Activated CD4-positive, alpha-beta memory T cell treated with anti-CD3 and anti-CD28 coated beads for 36 hours (primary cell): ENCODE measurements at regions of chr10 and their contacts with region 1.

Region 1: GRCh38 chr10:104274762-104275721 is 6.1 kb downstream of the GSTO2 start:
- DNase-seq: peak; percentile 65
- H3K4me3 Mint-ChIP-seq: peak overlapping the region; percentile 26
- H3K27ac Mint-ChIP-seq: no peak overlapping the region
- H3K4me1 Mint-ChIP-seq: peaks cover 4% of the 10 kb centered on the region
- H3K27me3 Mint-ChIP-seq: peaks cover 7% of the 10 kb centered on the region

Region 2: DNA sequence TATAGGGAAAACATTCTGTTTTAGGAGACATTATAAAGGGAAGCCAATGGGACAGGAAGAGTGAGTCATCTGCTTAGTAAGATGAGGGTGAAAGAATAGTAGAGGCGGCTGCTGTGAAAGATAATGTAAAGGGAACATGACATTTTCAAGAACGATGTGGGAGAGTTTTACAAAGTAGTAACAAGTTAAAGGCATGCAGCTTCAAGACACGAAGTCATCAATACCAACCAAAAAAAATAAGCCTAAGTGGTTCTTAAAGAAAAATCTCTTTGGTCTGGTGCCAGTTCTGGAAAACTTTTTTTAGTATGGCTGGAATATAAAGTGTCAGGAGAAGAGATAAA is 14.3 kb before region 1 on chr10:
- CTCF ChIA-PET with region 1: interaction called, 48 read pairs
- POLR2A ChIA-PET with region 1: no interaction called
- intact Hi-C with region 1: no loop called
- DNase-seq: no peak
- H3K4me3 Mint-ChIP-seq: peak overlapping the region; percentile 60
- H3K27ac Mint-ChIP-seq: peak overlapping the region; percentile 95
- H3K4me1 Mint-ChIP-seq: peaks cover 86% of the 10 kb centered on the region
- H3K27me3 Mint-ChIP-seq: no peaks in the 10 kb centered on the region

Region 3: DNA sequence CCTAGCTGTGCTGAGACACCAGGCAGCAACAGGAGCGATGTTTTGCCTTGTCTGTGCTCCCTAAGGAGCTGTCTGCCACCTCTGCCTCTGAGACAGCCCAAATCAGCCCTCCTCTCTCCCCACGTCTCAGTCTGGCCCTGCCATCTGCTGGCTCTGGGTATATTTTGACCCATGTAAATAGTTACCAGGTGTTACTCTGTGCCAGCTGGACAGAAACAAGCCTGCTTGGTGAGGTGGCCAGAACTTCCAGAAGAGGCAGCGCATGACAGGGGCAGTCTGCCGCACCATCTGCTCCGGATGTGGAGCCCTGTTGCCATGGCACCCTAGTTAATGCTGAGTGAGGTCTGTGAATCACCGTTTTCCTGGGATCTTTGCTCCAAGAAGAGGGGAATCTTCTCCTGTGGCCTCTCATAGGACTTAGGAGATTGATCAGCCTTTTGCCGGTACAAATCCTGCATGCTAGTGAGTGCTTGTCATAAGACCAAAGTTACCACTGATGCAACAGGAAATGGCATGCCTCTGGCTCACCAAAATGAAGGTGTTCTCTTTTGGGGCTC is 25.8 kb after region 1 on chr10:
- CTCF ChIA-PET with region 1: interaction called, 193 read pairs
- POLR2A ChIA-PET with region 1: interaction called, 3 read pairs
- intact Hi-C with region 1: no loop called
- DNase-seq: peak; percentile 43
- H3K4me3 Mint-ChIP-seq: no peak overlapping the region
- H3K27ac Mint-ChIP-seq: peak overlapping the region; percentile 43
- H3K4me1 Mint-ChIP-seq: peaks cover 12% of the 10 kb centered on the region
- H3K27me3 Mint-ChIP-seq: peaks cover 2% of the 10 kb centered on the region

Region 4: GRCh38 chr10:104337974-104338735 is 63.1 kb after region 1 on chr10 and contains the start of gene ITPRIP:
- CTCF ChIA-PET with region 1: interaction called, 15 read pairs
- POLR2A ChIA-PET with region 1: interaction called, 3 read pairs
- intact Hi-C with region 1: no loop called
- DNase-seq: peak; percentile 81
- H3K4me3 Mint-ChIP-seq: peak within 1 kb of the TSS; percentile 82
- H3K27ac Mint-ChIP-seq: peak within 1 kb of the TSS; percentile 90
- H3K4me1 Mint-ChIP-seq: peaks cover 48% of the 10 kb centered on the region
- H3K27me3 Mint-ChIP-seq: no peaks in the 10 kb centered on the region
- total RNA-seq, gene ITPRIP: 15.6 to 16.6 TPM

Region 5: DNA sequence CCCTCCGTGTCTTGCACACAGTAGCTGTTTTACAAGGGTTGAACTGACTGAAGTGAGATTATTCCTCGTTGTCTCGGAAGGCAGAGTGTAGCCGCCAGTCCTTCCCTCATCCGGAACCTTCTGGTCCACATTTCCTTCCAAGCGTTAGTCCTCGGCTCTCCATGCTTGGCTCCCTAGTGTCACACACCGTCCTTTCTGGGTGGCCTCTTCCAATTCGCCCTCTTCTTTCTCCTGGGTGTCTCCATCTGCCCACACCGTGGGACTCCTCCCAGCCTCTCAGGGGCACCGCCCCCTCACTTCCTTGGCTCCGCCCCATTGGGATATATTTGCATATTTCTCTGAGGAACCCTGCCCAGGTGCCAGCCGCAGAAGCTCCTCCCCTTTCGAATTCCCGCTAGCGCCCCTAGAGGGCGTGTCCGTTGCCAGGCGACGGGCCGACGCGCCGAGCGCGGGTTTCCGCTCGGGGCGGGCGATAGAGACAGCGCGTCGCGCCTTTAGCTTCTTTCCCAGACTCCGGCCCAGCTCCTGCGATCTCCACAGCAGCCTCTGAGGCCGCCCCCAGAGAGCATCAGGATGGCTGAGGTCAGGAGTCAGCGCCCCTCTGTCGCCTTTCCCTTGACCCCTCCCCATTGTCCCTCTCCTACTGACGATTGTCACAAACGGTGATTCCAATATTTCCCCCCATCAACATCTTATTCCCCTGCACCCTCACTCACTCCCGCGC is 78.4 kb after region 1 on chr10 and contains the start of gene CFAP58:
- CTCF ChIA-PET with region 1: interaction called, 55 read pairs
- POLR2A ChIA-PET with region 1: no interaction called
- intact Hi-C with region 1: no loop called
- DNase-seq: peak; percentile 94
- H3K4me3 Mint-ChIP-seq: peak within 1 kb of the TSS; percentile 10
- H3K27ac Mint-ChIP-seq: peak within 1 kb of the TSS; percentile 29
- H3K4me1 Mint-ChIP-seq: no peaks in the 10 kb centered on the region
- H3K27me3 Mint-ChIP-seq: no peaks in the 10 kb centered on the region
- total RNA-seq, gene CFAP58: 0.31 to 0.88 TPM